Activated CD8-positive, alpha-beta T cell treated with anti-CD3 and anti-CD28 coated beads for 36 hours (primary cell): ENCODE measurements at regions of chr20 and their contacts with region 1.

Region 1: DNA sequence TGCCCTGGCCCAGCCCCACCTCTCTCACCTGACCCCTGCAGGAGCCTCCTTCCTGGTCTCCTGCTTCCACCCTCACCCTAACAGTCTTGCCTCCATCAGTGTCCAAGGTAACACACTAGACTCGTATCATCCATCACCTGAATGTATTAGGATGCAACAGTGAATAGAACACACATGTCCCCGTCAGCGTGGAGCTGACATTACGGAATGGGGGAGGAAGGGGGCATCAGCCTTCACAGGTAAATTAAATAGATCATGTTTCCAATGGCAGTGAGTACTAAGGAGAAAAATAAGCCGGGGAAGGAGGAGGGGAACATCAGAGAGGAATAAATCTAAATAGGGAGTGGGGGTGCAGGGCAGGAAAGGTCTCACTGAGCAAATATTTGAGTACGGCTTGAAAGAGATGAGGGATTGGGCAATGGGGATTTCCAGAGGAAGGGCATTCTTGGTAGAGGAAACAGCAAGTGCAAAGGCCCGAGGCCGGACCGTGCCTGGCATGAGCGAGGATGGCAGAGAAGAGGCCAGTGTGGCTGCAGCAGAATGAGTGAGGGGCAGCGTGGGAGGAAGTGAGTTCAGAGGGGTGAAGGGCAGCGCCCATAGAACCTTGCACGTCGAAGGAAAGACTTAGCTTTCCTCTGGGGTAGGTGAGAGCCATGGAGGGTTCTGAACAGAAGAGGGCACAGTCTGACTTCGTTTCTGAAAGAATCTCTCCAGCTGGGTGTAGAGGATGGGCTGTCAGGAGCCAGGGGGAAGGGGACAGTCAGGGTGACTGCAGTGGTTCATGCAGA is 110.1 kb upstream of the PTPN1 start:
- DNase-seq: no peak
- ATAC-seq: no peak
- H3K4me3 Mint-ChIP-seq: no peak overlapping the region
- H3K27ac Mint-ChIP-seq: no peak overlapping the region
- H3K4me1 Mint-ChIP-seq: no peaks in the 10 kb centered on the region
- H3K27me3 Mint-ChIP-seq: peaks cover under 1% of the 10 kb centered on the region
- CTCF ChIP-seq: no peak

Region 2: DNA sequence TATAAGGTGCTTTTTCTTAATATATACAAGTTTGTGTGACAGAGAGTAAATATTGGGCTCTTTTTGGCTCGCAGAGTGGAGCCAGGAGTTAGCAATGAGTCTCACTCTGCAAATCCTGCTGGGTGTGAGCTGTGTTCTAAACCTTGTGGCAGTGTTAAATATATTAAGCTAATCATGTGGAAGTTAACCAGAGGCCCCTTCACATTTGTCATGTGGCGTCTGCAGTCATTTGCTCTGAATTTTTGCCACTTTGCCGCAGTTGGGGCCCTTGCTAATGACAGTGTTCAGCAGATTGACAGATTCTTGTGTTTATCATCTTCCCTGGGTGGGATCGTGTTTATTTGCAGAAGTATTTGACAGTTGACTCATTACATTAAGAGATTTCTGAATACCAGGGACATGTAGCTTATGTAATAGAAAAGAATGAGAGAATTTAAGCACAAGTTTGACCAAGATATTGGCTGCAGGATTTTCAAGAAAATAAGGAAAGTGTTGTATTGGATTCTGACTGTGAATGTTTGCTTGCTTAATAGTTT is 522.7 kb before region 1 on chr20:
- CTCF ChIA-PET with region 1: no interaction called
- POLR2A ChIA-PET with region 1: no interaction called
- intact Hi-C with region 1: no loop called
- DNase-seq: no peak
- ATAC-seq: no peak
- H3K4me3 Mint-ChIP-seq: no peak overlapping the region
- H3K27ac Mint-ChIP-seq: no peak overlapping the region
- H3K4me1 Mint-ChIP-seq: no peaks in the 10 kb centered on the region
- H3K27me3 Mint-ChIP-seq: no peaks in the 10 kb centered on the region
- CTCF ChIP-seq: no peak

Region 3: GRCh38 chr20:50418890-50419642 is 19.0 kb after region 1 on chr20:
- CTCF ChIA-PET with region 1: no interaction called
- POLR2A ChIA-PET with region 1: no interaction called
- intact Hi-C with region 1: no loop called
- DNase-seq: no peak
- ATAC-seq: no peak
- H3K4me3 Mint-ChIP-seq: no peak overlapping the region
- H3K27ac Mint-ChIP-seq: no peak overlapping the region
- H3K4me1 Mint-ChIP-seq: no peaks in the 10 kb centered on the region
- H3K27me3 Mint-ChIP-seq: no peaks in the 10 kb centered on the region
- CTCF ChIP-seq: no peak

Region 4: GRCh38 chr20:50460460-50461267 is 60.6 kb after region 1 on chr20:
- CTCF ChIA-PET with region 1: interaction called, 10 read pairs
- POLR2A ChIA-PET with region 1: no interaction called
- intact Hi-C with region 1: no loop called
- DNase-seq: peak; percentile 89
- ATAC-seq: peak; percentile 92
- H3K4me3 Mint-ChIP-seq: no peak overlapping the region
- H3K27ac Mint-ChIP-seq: no peak overlapping the region
- H3K4me1 Mint-ChIP-seq: peaks cover 3% of the 10 kb centered on the region
- H3K27me3 Mint-ChIP-seq: peaks cover 5% of the 10 kb centered on the region
- CTCF ChIP-seq: peak; percentile 86